Heart right ventricle (tissue), 16 donors: ENCODE measurements at regions of chr3 and their contacts with region 1.

Region 1: GRCh38 chr3:71515636-71516365 is 67.7 kb downstream of the FOXP1 start:
- DNase-seq: no peak
- ATAC-seq: peak in 7 of 8 donors; percentile 41 to 74 (median 60)
- H3K4me3 ChIP-seq: peak overlapping the region in 1 of 10 donors; percentile 8
- H3K27ac ChIP-seq: peak overlapping the region in 3 of 10 donors; percentile 30 to 61 (median 39)
- H3K4me1 ChIP-seq: peaks cover 0 to 38% (median 3%) of the 10 kb centered on the region in 9 donors
- H3K27me3 ChIP-seq: no peaks in the 10 kb centered on the region
- CTCF ChIP-seq: no peak

Region 2: DNA sequence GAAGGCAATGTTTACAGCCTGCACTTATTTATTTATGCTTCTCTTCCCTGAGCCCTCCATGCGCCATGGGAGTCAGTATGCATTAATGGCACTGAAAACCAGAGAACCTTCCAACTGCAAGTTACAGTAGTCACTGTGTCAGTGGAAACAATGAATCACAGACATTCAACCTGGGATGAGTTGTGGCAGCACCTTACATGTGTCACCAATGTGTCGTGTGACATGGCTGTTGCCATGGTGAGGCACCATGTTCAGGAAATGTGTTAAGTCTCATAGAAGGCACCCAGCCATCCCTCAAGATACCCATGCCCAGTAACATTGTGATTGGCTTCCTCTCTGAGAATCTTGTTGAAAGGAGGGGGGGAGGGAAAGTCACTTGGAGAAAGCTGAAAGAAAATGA is 37.2 kb before region 1 on chr3:
- intact Hi-C with region 1: no loop called
- DNase-seq: no peak
- ATAC-seq: peak in 1 of 8 donors; percentile 18
- H3K4me3 ChIP-seq: peak overlapping the region in 1 of 10 donors; percentile 7
- H3K27ac ChIP-seq: no peak overlapping the region
- H3K4me1 ChIP-seq: no peaks in the 10 kb centered on the region
- H3K27me3 ChIP-seq: no peaks in the 10 kb centered on the region
- CTCF ChIP-seq: no peak

Region 3: DNA sequence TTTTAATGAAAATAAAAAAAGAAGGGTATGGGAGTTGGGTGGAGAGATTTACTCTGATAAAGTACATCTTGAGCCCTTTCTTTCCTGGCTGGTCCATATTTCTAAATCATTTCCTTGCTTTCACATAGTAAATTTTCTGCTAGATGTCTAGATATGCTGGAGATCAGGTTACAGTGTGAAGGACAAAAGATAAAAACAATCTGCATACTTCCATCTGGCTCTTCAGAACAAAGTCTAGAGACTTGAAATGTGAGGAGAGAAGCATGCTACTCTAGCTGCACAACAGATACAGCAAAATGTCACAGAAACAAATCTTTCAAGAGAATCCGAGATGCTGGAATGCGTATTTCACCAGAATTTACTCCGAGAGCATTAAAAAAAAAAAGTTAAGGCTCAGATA is 25.5 kb after region 1 on chr3:
- intact Hi-C with region 1: loop called in 1 of 10 experiments (anchors 2 kb)
- DNase-seq: no peak
- ATAC-seq: no peak
- H3K4me3 ChIP-seq: no peak overlapping the region
- H3K27ac ChIP-seq: no peak overlapping the region
- H3K4me1 ChIP-seq: peaks cover 5 to 55% (median 22%) of the 10 kb centered on the region in 9 donors
- H3K27me3 ChIP-seq: no peaks in the 10 kb centered on the region
- CTCF ChIP-seq: no peak

Region 4: GRCh38 chr3:71554649-71555048 is 38.8 kb after region 1 on chr3:
- intact Hi-C with region 1: no loop called
- DNase-seq: no peak
- ATAC-seq: no peak
- H3K4me3 ChIP-seq: no peak overlapping the region
- H3K27ac ChIP-seq: no peak overlapping the region
- H3K4me1 ChIP-seq: peaks cover 0 to 15% (median 0%) of the 10 kb centered on the region in 9 donors
- H3K27me3 ChIP-seq: no peaks in the 10 kb centered on the region
- CTCF ChIP-seq: no peak